Activated T-helper 1 cell treated with anti-CD3 and anti-CD28 coated beads, Interleukin-12 subunit alpha, Interleukin-12 subunit beta, Interleukin-2, Interleukin-4 antibody, amounts not matched to agents 30 ng/mL and 10 ng/mL and 1 ng/mL, durations not matched to agents 14 hours and 24 hours and 36 hours (primary cell): ENCODE measurements at regions of chr5 and their contacts with region 1.

Region 1: GRCh38 chr5:132820162-132820754 is 7.2 kb downstream of the SOWAHA start:
- DNase-seq: peak; percentile 82
- H3K4me3 Mint-ChIP-seq: no peak overlapping the region
- H3K27ac Mint-ChIP-seq: no peak overlapping the region
- H3K4me1 Mint-ChIP-seq: peaks cover 29% of the 10 kb centered on the region
- H3K27me3 Mint-ChIP-seq: peaks cover 45% of the 10 kb centered on the region

Region 2: GRCh38 chr5:132386644-132387286 is 433.5 kb before region 1 on chr5:
- intact Hi-C with region 1: loop called (anchors 1 kb)
- DNase-seq: peak; percentile 72
- H3K4me3 Mint-ChIP-seq: no peak overlapping the region
- H3K27ac Mint-ChIP-seq: peak overlapping the region; percentile 54
- H3K4me1 Mint-ChIP-seq: peaks cover 61% of the 10 kb centered on the region
- H3K27me3 Mint-ChIP-seq: peaks cover 3% of the 10 kb centered on the region

Region 3: DNA sequence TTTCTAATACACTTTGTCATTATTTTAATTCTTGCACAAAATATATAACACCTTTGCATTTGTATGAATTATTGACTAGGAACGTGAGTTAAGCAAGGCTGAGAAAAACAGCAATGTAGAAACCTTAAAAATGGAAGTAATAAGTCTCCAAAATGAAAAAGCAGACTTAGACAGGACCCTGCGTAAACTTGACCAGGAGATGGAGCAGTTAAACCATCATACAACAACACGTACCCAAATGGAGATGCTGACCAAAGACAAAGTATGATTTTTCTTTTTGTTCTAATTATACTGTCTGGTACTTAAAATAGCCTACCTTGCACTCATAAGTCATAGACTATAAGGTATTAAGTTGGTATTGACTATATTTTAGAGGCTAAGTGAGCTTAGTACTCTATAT is 229.1 kb before region 1 on chr5:
- intact Hi-C with region 1: loop called (anchors 1 kb)
- DNase-seq: no peak
- H3K4me3 Mint-ChIP-seq: no peak overlapping the region
- H3K27ac Mint-ChIP-seq: no peak overlapping the region
- H3K4me1 Mint-ChIP-seq: peaks cover 2% of the 10 kb centered on the region
- H3K27me3 Mint-ChIP-seq: no peaks in the 10 kb centered on the region

Region 4: GRCh38 chr5:132612846-132613245 is 207.4 kb before region 1 on chr5:
- intact Hi-C with region 1: no loop called
- DNase-seq: no peak
- H3K4me3 Mint-ChIP-seq: no peak overlapping the region
- H3K27ac Mint-ChIP-seq: no peak overlapping the region
- H3K4me1 Mint-ChIP-seq: peaks cover 10% of the 10 kb centered on the region
- H3K27me3 Mint-ChIP-seq: no peaks in the 10 kb centered on the region

Region 5: GRCh38 chr5:132746954-132747615 is 73.2 kb before region 1 on chr5 and contains the start of gene CCNI2:
- intact Hi-C with region 1: loop called (anchors 2 kb)
- DNase-seq: peak; percentile 65
- H3K4me3 Mint-ChIP-seq: peak within 1 kb of the TSS; percentile 82
- H3K27ac Mint-ChIP-seq: peak within 1 kb of the TSS; percentile 86
- H3K4me1 Mint-ChIP-seq: peaks cover 45% of the 10 kb centered on the region
- H3K27me3 Mint-ChIP-seq: peaks cover 20% of the 10 kb centered on the region
- total RNA-seq, gene CCNI2: 52.5 and 55.6 TPM in 2 replicates

Region 6: DNA sequence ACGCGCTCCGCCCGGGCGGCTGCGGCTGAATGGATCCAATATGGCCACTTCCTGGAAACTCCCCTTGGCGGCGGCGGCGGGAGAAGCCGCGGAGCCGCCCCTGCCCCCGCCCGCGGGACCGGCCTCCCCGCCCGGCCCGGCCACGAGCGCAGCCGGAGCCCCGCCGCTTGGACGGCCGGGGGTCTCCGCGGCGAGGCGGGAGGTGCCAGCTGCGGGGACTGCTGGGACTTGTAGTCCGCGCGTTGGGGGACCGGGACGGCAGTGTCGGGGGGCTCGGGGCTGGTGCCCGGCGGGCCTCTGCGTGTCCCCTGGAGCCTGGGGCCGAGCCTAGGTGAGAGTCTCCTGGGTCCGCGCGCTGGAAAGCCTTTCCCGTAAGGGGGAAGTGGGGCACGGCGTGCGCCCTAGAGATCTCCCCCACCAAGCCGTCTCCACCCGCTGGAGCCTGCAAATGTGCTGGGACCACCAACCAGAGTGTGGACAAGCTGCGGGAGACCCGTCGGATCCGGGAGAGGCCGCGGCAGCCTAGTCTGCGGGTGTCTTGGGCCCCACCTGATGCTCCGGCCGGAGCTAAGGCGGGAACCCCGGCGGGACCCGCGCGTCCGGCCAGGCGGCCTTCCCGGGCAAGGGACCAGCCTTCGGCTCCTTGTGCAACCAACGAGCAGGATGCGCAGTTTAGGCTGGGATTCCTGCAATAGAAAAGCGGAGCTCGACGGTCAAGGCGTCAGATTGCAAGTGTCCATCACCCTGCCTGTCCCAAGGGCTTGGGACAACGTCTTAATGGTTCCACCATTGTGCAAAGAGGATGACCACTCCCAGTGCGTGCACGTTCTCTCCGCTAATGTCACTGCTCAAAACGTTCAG is 42.8 kb before region 1 on chr5 and contains the start of gene SEPTIN8:
- intact Hi-C with region 1: loop called (anchors 2 kb)
- DNase-seq: peak; percentile 43
- H3K4me3 Mint-ChIP-seq: peak within 1 kb of the TSS; percentile 87
- H3K27ac Mint-ChIP-seq: peak within 1 kb of the TSS; percentile 63
- H3K4me1 Mint-ChIP-seq: peaks cover 41% of the 10 kb centered on the region
- H3K27me3 Mint-ChIP-seq: peaks cover 45% of the 10 kb centered on the region
- total RNA-seq, gene SEPTIN8: 45.8 and 46.2 TPM in 2 replicates

Region 7: DNA sequence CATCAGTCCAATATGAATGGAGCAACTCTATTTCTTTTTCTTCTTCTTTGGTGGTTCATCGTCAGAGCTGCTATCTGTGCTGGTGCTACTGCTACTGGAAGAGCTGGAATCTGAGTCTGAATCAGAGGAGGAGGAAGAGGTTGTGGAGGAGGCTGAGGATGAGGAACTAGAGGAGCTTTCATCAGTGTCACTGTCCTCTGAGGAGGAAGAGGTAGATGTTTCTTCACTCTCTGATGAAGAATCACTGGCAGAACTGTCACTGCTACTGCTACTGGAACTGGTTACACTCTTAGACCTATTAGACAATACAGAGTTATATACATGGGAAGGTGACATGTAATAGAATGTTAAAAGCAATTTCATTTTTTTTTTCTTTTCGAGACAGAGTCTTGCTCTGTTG is 178.3 kb after region 1 on chr5:
- intact Hi-C with region 1: no loop called
- DNase-seq: no peak
- H3K4me3 Mint-ChIP-seq: no peak overlapping the region
- H3K27ac Mint-ChIP-seq: no peak overlapping the region
- H3K4me1 Mint-ChIP-seq: no peaks in the 10 kb centered on the region
- H3K27me3 Mint-ChIP-seq: no peaks in the 10 kb centered on the region